ENCODE measurements at regions of chr12 and their contacts with region 1.

Region 1: GRCh38 chr12:123232807-123233543 is at the starts of genes MPHOSPH9 and MTRFR:
- DNase-seq: peak; percentile 97 to 100 (median 98)
- ATAC-seq: peak; percentile 87
- H3K4me3 ChIP-seq: peak within 1 kb of the TSS; percentile 97
- H3K4me3 Mint-ChIP-seq: peak within 1 kb of the TSS; percentile 95
- H3K27ac ChIP-seq: peak within 1 kb of the TSS; percentile 85 to 91
- H3K27ac Mint-ChIP-seq: peak within 1 kb of the TSS; percentile 97
- H3K4me1 ChIP-seq: peaks cover 67% of the 10 kb centered on the region
- H3K4me1 Mint-ChIP-seq: peaks cover 76% of the 10 kb centered on the region
- H3K27me3 ChIP-seq: no peaks in the 10 kb centered on the region
- H3K27me3 Mint-ChIP-seq: no peaks in the 10 kb centered on the region
- CTCF ChIP-seq: no peak
- total RNA-seq, gene MPHOSPH9: 80.9 to 84.5 TPM
- total RNA-seq, gene MTRFR: 43.2 to 44.5 TPM

Region 2: GRCh38 chr12:122526683-122527477 is 706.1 kb before region 1 on chr12 and contains the starts of genes KNTC1 and RSRC2:
- CTCF ChIA-PET with region 1: no interaction called
- POLR2A ChIA-PET with region 1: interaction called, 13 read pairs
- intact Hi-C with region 1: loop called in 1 of 2 experiments (anchors 5 kb)
- DNase-seq: peak; percentile 93 to 100 (median 96)
- ATAC-seq: peak; percentile 90
- H3K4me3 ChIP-seq: peak within 1 kb of the TSS; percentile 97
- H3K4me3 Mint-ChIP-seq: no peak within 1 kb of the TSS
- H3K27ac ChIP-seq: peak within 1 kb of the TSS; percentile 98 to 99
- H3K27ac Mint-ChIP-seq: no peak within 1 kb of the TSS
- H3K4me1 ChIP-seq: peaks cover 21% of the 10 kb centered on the region
- H3K4me1 Mint-ChIP-seq: peaks cover 36% of the 10 kb centered on the region
- H3K27me3 ChIP-seq: no peaks in the 10 kb centered on the region
- H3K27me3 Mint-ChIP-seq: no peaks in the 10 kb centered on the region
- CTCF ChIP-seq: no peak
- total RNA-seq, gene KNTC1: 23.3 to 23.8 TPM
- total RNA-seq, gene RSRC2: 339 to 341 TPM

Region 3: DNA sequence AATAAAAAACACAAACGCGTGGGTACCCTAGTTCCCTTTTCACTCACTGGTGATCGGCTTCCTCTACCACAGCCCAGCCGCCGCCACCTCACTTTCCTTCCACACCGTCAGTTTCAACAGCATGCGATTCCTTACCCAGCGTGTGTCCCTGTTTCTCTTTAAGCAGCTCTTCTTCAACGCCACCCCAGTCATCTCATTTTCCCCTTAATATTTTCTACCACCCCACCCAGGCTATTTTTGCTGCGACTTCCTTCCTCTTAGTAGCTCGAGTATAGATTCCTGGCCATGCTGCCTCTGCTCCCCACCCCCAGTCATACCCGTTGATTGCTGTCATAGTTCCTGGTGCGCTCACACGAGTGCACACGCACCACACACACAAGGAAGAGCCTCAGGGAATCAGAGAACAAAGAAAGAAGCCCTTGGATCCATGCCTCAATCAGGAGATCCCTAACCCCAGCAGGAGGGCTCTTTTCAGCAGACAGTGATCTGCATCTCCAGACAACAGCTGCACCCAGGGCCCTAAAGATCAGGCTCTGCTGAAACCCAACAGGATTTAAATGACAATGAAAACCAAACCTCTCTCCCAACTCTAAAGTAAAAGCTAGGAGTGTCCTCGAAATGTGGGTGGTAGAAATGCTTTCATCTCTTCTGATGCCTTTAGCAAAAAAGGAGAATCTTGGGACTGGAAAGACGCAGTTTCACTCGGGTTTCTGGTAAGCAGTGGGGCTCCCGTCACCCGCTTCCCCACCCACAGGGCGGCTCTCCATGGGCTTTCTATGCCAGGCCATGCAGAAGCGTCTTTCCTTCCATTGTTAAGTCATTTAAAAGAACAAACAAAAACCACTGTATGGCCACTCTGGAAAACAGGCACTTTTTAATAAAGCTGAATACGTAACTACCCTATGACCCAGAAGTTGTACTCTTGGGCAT is 360.9 kb before region 1 on chr12:
- CTCF ChIA-PET with region 1: interaction called, 3 read pairs
- POLR2A ChIA-PET with region 1: interaction called, 5 read pairs
- intact Hi-C with region 1: loop called in 1 of 2 experiments (anchors 5 kb)
- DNase-seq: peak in 6 of 14 experiments; percentile 30 to 72 (median 58)
- ATAC-seq: peak; percentile 43
- H3K4me3 ChIP-seq: peak overlapping the region; percentile 51
- H3K4me3 Mint-ChIP-seq: peak overlapping the region; percentile 86
- H3K27ac ChIP-seq: peak overlapping the region; percentile 18 to 74
- H3K27ac Mint-ChIP-seq: peak overlapping the region; percentile 61
- H3K4me1 ChIP-seq: peaks cover 65% of the 10 kb centered on the region
- H3K4me1 Mint-ChIP-seq: peaks cover 71% of the 10 kb centered on the region
- H3K27me3 ChIP-seq: no peaks in the 10 kb centered on the region
- H3K27me3 Mint-ChIP-seq: no peaks in the 10 kb centered on the region
- CTCF ChIP-seq: no peak

Region 4: DNA sequence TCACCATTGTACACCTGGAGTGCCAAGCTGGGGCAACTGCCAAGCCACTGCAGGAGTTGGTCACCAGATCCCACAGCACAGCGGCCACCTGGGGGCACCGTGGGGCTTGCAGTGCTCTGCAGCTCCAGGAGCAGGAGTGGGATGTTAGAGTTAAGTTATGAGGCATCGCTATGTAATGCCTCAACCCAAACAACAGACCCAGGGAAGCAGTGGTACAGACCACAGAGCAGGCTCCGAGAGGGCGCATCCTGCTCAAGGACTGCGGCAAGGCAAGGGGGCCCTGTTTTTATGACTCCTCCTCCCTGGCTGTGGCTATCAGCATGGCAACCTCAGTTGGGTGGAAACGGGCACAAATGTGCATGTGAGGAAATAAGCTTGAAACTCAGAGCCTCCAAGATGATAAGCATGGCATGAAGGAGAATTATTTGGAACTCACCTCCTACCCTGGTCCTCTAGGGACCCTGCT is 189.4 kb before region 1 on chr12:
- CTCF ChIA-PET with region 1: interaction called, 28 read pairs
- POLR2A ChIA-PET with region 1: interaction called, 44 read pairs
- intact Hi-C with region 1: loop called (anchors 1 kb)
- DNase-seq: peak; percentile 44 to 84 (median 68)
- ATAC-seq: peak; percentile 97
- H3K4me3 ChIP-seq: no peak overlapping the region
- H3K4me3 Mint-ChIP-seq: peak overlapping the region; percentile 42
- H3K27ac ChIP-seq: no peak overlapping the region
- H3K27ac Mint-ChIP-seq: peak overlapping the region; percentile 80
- H3K4me1 ChIP-seq: peaks cover 21% of the 10 kb centered on the region
- H3K4me1 Mint-ChIP-seq: peaks cover 27% of the 10 kb centered on the region
- H3K27me3 ChIP-seq: no peaks in the 10 kb centered on the region
- H3K27me3 Mint-ChIP-seq: no peaks in the 10 kb centered on the region
- CTCF ChIP-seq: peak; percentile 58

Region 5: DNA sequence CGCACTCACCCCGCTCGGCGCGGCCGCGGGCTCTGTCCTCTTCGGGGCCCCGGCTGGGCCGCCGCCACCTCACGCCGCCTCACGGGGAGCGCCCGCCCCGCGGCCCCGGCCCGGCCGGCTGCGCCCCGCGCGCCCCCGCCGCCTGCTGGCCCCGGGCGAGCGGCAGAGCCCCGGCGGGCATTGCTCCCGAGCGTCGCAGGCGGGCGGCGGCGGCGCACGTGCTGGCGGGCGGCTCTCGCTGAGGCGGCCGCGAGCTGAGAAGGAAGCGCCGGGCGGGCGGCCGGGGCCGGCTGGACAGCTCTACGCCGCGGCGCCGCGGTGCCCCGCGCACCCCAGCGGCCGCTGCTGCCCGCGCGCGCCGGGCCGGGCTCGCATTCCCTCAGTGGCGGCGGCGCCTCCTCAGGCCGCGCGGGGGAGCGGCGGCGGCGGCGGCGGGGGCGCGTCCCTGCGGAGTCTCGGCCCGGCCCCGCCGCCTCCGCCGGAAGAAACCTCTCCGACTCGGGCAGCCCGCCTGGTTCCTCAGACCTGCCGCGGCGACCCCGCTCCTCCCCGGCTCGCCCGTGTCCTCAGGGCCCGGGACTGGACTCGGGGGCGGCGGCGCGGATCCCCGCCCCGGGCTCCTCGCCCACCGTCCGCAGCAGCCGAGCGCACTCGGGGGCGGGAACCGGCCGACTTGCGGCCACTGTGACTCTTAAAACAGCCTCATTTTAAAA is 82.1 kb before region 1 on chr12 and contains the start of gene PITPNM2:
- CTCF ChIA-PET with region 1: interaction called, 7 read pairs
- POLR2A ChIA-PET with region 1: interaction called, 49 read pairs
- intact Hi-C with region 1: loop called (anchors 2 to 5 kb)
- DNase-seq: peak; percentile 28 to 87 (median 60)
- ATAC-seq: peak; percentile 86
- H3K4me3 ChIP-seq: peak within 1 kb of the TSS; percentile 76
- H3K4me3 Mint-ChIP-seq: peak within 1 kb of the TSS; percentile 93
- H3K27ac ChIP-seq: peak within 1 kb of the TSS; percentile 22 to 40
- H3K27ac Mint-ChIP-seq: peak within 1 kb of the TSS; percentile 89
- H3K4me1 ChIP-seq: peaks cover 27% of the 10 kb centered on the region
- H3K4me1 Mint-ChIP-seq: peaks cover 52% of the 10 kb centered on the region
- H3K27me3 ChIP-seq: no peaks in the 10 kb centered on the region
- H3K27me3 Mint-ChIP-seq: no peaks in the 10 kb centered on the region
- CTCF ChIP-seq: no peak
- total RNA-seq, gene PITPNM2: 37.3 to 38.3 TPM

Region 6: DNA sequence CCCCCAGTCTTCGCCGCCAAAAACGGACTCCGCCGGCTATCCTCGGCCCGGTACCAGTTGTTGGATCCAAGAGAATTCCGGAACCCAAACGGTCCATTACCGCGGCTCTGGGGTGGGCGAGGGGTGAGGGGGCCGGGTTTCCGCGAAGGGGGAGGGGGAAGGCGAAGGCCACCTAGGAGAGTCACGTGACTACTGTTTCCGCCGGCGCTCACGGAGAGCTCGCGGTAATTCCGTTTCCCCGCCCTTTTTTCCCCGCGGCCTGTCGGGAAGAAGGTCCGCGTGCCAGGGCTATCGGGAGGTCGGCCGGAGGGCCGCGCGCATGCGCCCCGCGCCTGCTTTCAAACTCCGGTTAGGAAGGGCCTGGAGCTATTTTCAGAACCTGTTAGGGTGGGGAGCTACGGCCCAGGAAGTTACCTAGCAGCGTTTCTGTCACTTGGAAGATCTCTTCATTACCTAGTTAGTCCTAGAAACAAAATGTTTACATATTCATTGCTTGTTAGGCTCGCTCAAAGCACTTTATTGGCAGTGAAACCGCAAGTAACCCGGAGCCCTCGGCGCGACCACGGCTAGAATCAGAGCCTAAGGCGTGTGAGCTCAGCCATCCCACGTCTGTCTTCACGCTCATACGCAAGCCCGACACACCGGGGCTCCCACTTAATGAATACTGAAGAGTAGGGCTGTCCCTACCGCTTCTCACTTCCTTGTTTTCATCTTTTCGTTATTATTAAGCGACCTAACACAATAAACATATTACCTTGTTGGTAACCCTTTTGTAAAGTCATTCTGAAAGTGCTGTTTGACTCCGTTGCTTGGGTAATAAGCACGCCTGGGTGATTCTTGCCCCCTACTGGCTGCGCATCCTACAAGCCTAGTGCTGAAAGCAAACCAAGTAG is 132.3 kb after region 1 on chr12:
- CTCF ChIA-PET with region 1: interaction called, 5 read pairs
- POLR2A ChIA-PET with region 1: interaction called, 38 read pairs
- intact Hi-C with region 1: no loop called
- DNase-seq: peak; percentile 95 to 100 (median 97)
- ATAC-seq: peak; percentile 75
- H3K4me3 ChIP-seq: peak overlapping the region; percentile 93
- H3K4me3 Mint-ChIP-seq: peak overlapping the region; percentile 89
- H3K27ac ChIP-seq: peak overlapping the region; percentile 93 to 96
- H3K27ac Mint-ChIP-seq: peak overlapping the region; percentile 88
- H3K4me1 ChIP-seq: peaks cover 47% of the 10 kb centered on the region
- H3K4me1 Mint-ChIP-seq: peaks cover 24% of the 10 kb centered on the region
- H3K27me3 ChIP-seq: no peaks in the 10 kb centered on the region
- H3K27me3 Mint-ChIP-seq: no peaks in the 10 kb centered on the region
- CTCF ChIP-seq: peak; percentile 85

Region 7: DNA sequence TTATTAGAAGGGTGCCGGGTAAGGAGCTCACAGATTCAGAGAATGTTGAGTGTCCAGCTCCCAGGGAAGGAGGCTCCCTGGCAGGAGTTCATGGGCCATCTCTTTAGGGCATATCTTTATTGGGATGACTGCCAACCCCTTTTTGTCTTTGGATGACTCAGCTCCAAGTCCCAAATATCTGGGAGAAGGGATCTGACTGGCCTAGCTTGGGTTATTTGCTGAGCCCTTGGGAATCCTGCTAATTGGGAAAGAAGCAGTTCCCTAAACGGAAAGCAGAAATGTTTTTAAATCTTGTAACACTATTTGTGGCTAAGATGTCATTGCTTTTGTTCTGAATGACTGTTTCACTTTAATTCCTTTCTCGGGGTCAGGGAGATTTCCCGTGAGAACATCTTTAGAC is 381.6 kb after region 1 on chr12:
- CTCF ChIA-PET with region 1: no interaction called
- POLR2A ChIA-PET with region 1: no interaction called
- intact Hi-C with region 1: no loop called
- DNase-seq: no peak
- ATAC-seq: no peak
- H3K4me3 ChIP-seq: no peak overlapping the region
- H3K4me3 Mint-ChIP-seq: no peak overlapping the region
- H3K27ac ChIP-seq: no peak overlapping the region
- H3K27ac Mint-ChIP-seq: no peak overlapping the region
- H3K4me1 ChIP-seq: no peaks in the 10 kb centered on the region
- H3K4me1 Mint-ChIP-seq: peaks cover 4% of the 10 kb centered on the region
- H3K27me3 ChIP-seq: no peaks in the 10 kb centered on the region
- H3K27me3 Mint-ChIP-seq: no peaks in the 10 kb centered on the region
- CTCF ChIP-seq: no peak